Activated CD4-positive, alpha-beta memory T cell treated with anti-CD3 and anti-CD28 coated beads for 36 hours (primary cell): ENCODE measurements at regions of chr12 and their contacts with region 1.

Region 1: GRCh38 chr12:125183187-125184067 is 118.2 kb downstream of the AACS start:
- DNase-seq: peak; percentile 85
- H3K4me3 Mint-ChIP-seq: no peak overlapping the region
- H3K27ac Mint-ChIP-seq: no peak overlapping the region
- H3K4me1 Mint-ChIP-seq: peaks cover 3% of the 10 kb centered on the region
- H3K27me3 Mint-ChIP-seq: peaks cover 52% of the 10 kb centered on the region

Region 2: DNA sequence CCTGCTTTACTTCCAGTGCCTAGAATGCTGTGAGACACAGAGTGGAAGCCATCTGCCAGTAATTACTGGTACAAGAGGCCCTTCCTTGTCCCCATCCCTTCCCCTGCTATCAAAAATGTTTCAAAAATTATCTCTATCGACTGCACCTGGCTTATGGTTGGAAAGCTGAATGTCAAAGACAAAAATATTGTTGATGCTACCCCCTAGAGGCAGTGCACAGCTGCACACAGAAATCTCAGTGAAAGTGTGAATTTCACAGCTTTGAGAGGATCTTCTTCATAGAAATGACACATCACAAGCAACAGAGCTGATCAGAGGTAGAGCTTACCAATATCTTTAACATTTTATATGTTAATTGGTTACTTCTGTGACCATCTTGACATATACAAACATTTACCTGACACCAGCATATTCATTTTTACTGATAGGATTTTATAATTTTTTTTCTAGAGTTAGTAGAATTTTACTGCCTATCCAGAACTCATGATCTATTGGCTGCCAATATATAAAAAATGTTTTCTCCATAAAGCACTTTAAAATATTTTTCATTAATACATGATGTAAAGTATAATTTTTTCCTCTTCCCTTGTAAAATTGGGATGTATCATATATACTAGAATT is 19.8 kb after region 1 on chr12:
- CTCF ChIA-PET with region 1: interaction called, 15 read pairs
- POLR2A ChIA-PET with region 1: no interaction called
- intact Hi-C with region 1: no loop called
- DNase-seq: no peak
- H3K4me3 Mint-ChIP-seq: no peak overlapping the region
- H3K27ac Mint-ChIP-seq: no peak overlapping the region
- H3K4me1 Mint-ChIP-seq: no peaks in the 10 kb centered on the region
- H3K27me3 Mint-ChIP-seq: peaks cover 14% of the 10 kb centered on the region

Region 3: DNA sequence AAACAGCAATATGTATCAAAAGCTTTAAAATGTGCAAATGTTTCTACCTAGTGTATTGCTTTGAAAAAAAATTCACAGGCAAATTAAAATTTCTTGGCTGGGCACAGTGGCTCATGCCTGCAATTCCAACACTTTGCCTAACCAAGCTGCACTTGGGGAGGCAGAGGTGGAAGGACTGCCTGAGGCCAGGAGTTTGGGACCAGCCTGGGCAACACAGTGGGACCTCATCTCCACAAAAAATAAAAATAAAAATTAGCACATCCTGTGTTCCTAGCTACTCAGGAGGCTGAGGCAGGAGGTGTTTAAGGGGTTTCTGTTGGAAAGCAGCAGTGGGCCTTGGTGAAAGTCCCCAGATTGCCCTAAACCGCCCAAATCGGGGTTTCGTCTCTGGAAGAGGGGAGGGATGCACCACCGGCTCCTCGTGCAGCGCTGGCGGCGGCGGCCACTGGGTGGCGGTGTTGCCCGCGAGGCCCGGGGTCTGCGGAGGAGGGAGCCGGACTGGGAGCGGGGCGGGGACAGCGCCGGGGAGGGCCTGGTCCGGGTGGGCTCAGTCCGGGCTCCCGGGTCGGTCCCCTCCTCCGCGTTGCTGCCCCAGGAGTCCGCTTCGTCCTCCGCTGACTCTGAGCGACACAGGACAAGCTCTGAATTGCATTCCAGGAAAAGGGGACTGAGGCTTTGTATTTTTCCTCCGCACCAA is 147.4 kb after region 1 on chr12:
- CTCF ChIA-PET with region 1: interaction called, 4 read pairs
- POLR2A ChIA-PET with region 1: no interaction called
- intact Hi-C with region 1: loop called (anchors 5 kb)
- DNase-seq: peak; percentile 65
- H3K4me3 Mint-ChIP-seq: no peak overlapping the region
- H3K27ac Mint-ChIP-seq: no peak overlapping the region
- H3K4me1 Mint-ChIP-seq: no peaks in the 10 kb centered on the region
- H3K27me3 Mint-ChIP-seq: peaks cover 14% of the 10 kb centered on the region

Region 4: DNA sequence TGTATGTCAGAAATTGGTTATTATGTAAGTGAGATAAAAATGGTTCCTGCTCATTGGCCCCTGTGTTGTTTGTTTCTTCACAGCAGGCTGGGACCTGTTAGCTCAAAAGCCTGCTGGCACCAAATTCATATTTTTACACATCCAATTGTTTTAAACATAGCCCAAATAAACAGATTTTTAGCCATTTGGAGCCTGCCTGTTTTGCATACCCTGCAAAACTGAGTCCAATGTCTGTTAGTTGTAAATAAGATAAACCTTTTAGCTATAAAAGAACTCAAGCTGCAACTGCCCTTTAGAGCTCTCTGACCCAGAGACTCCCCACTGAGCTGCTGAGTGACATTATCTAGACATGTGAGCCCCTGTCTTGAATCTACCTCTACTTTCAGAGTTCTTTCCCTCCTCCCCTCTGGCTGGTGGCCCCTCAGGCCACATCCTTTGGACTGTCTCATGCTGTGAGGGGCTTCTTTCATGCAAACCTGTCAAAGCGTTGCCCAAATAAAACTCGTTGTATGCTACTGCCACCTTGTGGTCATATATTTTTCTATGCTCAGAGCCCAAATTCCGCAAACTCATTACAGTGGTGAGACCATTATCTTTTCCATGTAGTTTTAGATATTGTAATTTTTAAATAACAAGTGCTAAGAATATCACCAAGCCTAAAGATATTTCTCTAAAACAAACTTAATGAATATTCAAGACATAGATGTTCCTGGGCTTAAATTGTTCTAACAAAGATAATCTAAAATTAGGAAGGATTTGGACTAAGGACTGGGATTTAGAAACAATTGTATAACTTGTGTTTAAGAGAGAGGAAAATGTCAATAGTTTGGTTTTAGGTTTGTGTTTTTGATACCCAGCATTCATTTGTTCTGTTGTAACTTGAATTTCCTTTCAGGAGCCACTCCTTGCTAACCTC is 219.7 kb after region 1 on chr12:
- CTCF ChIA-PET with region 1: interaction called, 33 read pairs
- POLR2A ChIA-PET with region 1: no interaction called
- intact Hi-C with region 1: loop called (anchors 1 kb)
- DNase-seq: no peak
- H3K4me3 Mint-ChIP-seq: no peak overlapping the region
- H3K27ac Mint-ChIP-seq: no peak overlapping the region
- H3K4me1 Mint-ChIP-seq: peaks cover 2% of the 10 kb centered on the region
- H3K27me3 Mint-ChIP-seq: no peaks in the 10 kb centered on the region

Region 5: DNA sequence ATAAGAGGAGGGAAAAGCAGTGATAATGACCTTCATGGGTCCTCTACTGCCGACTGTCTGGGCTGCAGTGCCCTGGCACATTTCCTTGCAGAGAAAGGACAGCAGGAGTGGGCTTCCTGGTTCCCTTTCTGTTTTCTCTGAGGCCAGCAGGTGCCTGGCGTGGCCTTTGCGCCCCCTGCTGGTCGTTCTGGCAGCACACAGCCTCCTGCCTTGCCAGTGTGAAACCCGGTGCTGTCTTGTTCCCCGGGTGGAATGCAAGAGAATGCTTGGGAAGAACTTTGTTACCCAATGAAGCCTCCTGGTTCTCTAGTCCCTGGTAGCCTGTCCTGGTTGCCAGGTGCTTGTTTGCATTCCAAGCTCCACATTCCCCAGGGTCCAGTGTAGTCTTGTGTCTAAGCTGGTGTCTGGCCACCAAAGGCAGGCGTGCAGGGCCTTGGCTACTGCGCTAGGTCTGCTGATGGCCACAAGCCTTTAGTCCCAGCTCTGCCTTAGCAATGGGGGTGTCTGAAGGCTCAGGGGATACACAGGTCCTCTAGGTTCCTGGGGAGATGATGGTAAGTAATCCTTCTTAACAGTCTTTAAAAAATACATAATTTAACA is 1691.1 kb after region 1 on chr12:
- CTCF ChIA-PET with region 1: interaction called, 6 read pairs
- POLR2A ChIA-PET with region 1: no interaction called
- intact Hi-C with region 1: loop called (anchors 10 kb)
- DNase-seq: peak; percentile 71
- H3K4me3 Mint-ChIP-seq: no peak overlapping the region
- H3K27ac Mint-ChIP-seq: no peak overlapping the region
- H3K4me1 Mint-ChIP-seq: peaks cover 5% of the 10 kb centered on the region
- H3K27me3 Mint-ChIP-seq: no peaks in the 10 kb centered on the region